ENCODE measurements at regions of chr7 and their contacts with region 1.

Region 1: GRCh38 chr7:32942786-32943653 is 14.2 kb upstream of the FKBP9 start:
- DNase-seq: peak; percentile 71 to 87
- H3K4me3 ChIP-seq: peak overlapping the region; percentile 78
- H3K27ac ChIP-seq: peak overlapping the region; percentile 16; the same call in 1 of the 2 replicates
- H3K4me1 ChIP-seq: peaks cover 10% of the 10 kb centered on the region
- H3K27me3 ChIP-seq: no peaks in the 10 kb centered on the region
- CTCF ChIP-seq: peak; percentile 52; the same call in 1 of the 2 replicates

Region 2: GRCh38 chr7:32495298-32496176 is 447.5 kb before region 1 on chr7 and contains the start of gene AVL9:
- CTCF ChIA-PET with region 1: no interaction called
- POLR2A ChIA-PET with region 1: no interaction called
- intact Hi-C with region 1: loop called (anchors 10 kb)
- DNase-seq: peak; percentile 89 to 100
- H3K4me3 ChIP-seq: peak within 1 kb of the TSS; percentile 92
- H3K27ac ChIP-seq: peak within 1 kb of the TSS; percentile 80
- H3K4me1 ChIP-seq: peaks cover 38% of the 10 kb centered on the region
- H3K27me3 ChIP-seq: no peaks in the 10 kb centered on the region
- CTCF ChIP-seq: no peak
- total RNA-seq, gene AVL9: 57.1 and 68.8 TPM in 2 replicates

Region 3: GRCh38 chr7:32611201-32612099 is 331.6 kb before region 1 on chr7:
- CTCF ChIA-PET with region 1: no interaction called
- POLR2A ChIA-PET with region 1: no interaction called
- intact Hi-C with region 1: no loop called
- DNase-seq: no peak
- H3K4me3 ChIP-seq: no peak overlapping the region
- H3K27ac ChIP-seq: no peak overlapping the region
- H3K4me1 ChIP-seq: peaks cover 4% of the 10 kb centered on the region
- H3K27me3 ChIP-seq: no peaks in the 10 kb centered on the region
- CTCF ChIP-seq: no peak

Region 4: DNA sequence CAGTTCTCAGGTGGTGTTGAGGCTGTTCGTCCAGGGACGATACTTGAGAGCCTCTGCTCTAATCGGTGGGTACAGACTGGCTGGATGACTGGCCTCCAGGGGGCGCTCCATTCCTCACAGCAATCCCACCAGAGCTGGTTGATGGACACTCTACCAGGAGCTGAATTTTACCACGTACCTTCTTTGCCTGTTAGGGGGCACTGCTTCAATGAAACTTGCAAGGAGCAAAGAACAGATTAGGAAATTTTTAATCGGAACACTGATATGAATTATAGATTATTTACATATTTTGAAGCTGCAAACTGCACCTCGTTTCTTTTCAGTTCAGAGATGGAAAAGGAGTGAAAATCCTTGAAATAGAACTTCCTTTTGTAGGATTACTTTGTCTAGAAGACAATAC is 96.3 kb before region 1 on chr7:
- CTCF ChIA-PET with region 1: interaction called, 14 read pairs
- POLR2A ChIA-PET with region 1: no interaction called
- intact Hi-C with region 1: no loop called
- DNase-seq: peak; percentile 72 to 76
- H3K4me3 ChIP-seq: no peak overlapping the region
- H3K27ac ChIP-seq: no peak overlapping the region
- H3K4me1 ChIP-seq: no peaks in the 10 kb centered on the region
- H3K27me3 ChIP-seq: no peaks in the 10 kb centered on the region
- CTCF ChIP-seq: peak; percentile 97

Region 5: DNA sequence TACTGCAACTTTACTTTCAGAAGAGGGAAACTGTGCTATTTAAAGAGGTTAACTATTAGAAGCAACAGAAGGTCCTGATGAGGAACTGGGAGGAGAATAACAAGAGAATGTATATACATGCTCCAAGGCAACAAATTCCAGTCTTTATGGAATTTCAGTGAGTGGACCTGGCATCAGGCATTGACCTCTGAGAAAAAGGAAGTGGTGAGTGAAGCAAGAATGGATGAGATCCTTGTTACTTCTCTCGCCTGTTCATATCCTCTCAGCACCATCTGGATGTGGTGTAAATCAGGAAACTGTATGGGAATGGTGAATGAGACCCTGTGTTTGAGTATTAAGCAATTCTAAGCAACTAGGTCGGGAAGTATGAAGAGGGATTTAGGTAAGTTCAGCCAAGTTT is 21.1 kb before region 1 on chr7:
- CTCF ChIA-PET with region 1: interaction called, 4 read pairs
- POLR2A ChIA-PET with region 1: interaction called, 33 read pairs
- intact Hi-C with region 1: no loop called
- DNase-seq: no peak
- H3K4me3 ChIP-seq: no peak overlapping the region
- H3K27ac ChIP-seq: no peak overlapping the region
- H3K4me1 ChIP-seq: no peaks in the 10 kb centered on the region
- H3K27me3 ChIP-seq: no peaks in the 10 kb centered on the region
- CTCF ChIP-seq: no peak

Region 6: GRCh38 chr7:33040803-33041516 is 97.9 kb after region 1 on chr7:
- CTCF ChIA-PET with region 1: no interaction called
- POLR2A ChIA-PET with region 1: no interaction called
- intact Hi-C with region 1: loop called (anchors 5 kb)
- DNase-seq: peak; percentile 61 to 71
- H3K4me3 ChIP-seq: no peak overlapping the region
- H3K27ac ChIP-seq: peak overlapping the region; percentile 6; the same call in 1 of the 2 replicates
- H3K4me1 ChIP-seq: peaks cover 27% of the 10 kb centered on the region
- H3K27me3 ChIP-seq: no peaks in the 10 kb centered on the region
- CTCF ChIP-seq: no peak

Region 7: DNA sequence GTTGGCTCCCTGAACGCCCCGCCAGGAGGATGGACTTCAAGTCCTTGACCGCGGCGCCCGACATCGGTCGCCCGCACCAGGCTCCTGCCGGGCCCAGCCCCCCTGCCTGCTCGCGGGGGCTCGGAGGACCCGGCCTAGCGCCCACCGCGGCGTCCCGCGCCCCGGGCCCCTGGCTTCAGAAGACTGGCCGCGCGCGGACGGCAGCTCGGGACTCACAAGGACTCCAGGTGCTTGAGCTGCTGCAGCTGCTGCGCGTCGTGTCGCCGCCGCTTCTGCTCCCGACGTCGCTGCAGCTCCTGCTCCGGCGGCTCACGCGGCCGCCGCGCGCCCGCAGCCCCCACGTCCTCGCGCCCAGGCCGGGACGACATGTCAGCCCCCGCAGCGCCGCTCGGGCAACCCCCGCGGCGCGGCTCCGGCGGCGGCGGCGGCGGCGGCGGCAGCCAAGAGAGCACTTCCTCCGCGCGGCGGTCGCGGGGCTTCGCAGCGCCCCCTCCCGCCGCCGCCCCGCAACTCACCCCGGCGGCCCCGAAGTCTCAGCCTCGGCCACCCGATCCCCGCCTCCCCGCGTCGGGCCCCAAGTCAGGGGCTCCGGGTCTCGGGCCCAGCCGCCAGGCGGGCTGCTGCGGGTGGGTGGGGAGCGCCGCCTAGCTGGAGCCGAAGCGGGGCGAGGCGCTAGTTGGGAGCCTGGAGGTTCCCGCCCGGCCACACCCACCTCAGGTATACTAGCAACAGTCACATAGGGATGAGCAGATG is 166.2 kb after region 1 on chr7 and contains the start of gene RP9:
- CTCF ChIA-PET with region 1: no interaction called
- POLR2A ChIA-PET with region 1: no interaction called
- intact Hi-C with region 1: loop called (anchors 5 kb)
- DNase-seq: peak in 1 of 2 experiments; percentile 80
- H3K4me3 ChIP-seq: peak within 1 kb of the TSS; percentile 69
- H3K27ac ChIP-seq: peak within 1 kb of the TSS; percentile 4
- H3K4me1 ChIP-seq: peaks cover 24% of the 10 kb centered on the region
- H3K27me3 ChIP-seq: 0 out of 2 replicates have a peak, but pooled peaks cover 10% of the 10 kb centered on the region
- CTCF ChIP-seq: peak; percentile 62; the same call in 1 of the 2 replicates
- total RNA-seq, gene RP9: 15.4 and 22.1 TPM in 2 replicates